ENCODE measurements at regions of chr10 and their contacts with region 1.

Region 1: GRCh38 chr10:48390933-48391845 is 84.7 kb downstream of the MAPK8 start:
- DNase-seq: no peak
- H3K4me3 Mint-ChIP-seq: no peak overlapping the region
- H3K27ac Mint-ChIP-seq: peak overlapping the region; percentile 4
- H3K4me1 Mint-ChIP-seq: peaks cover 50% of the 10 kb centered on the region
- H3K27me3 Mint-ChIP-seq: no peaks in the 10 kb centered on the region

Region 2: GRCh38 chr10:48336978-48337599 is 54.1 kb before region 1 on chr10:
- intact Hi-C with region 1: loop called (anchors 10 kb)
- DNase-seq: no peak
- H3K4me3 Mint-ChIP-seq: peak overlapping the region; percentile 26
- H3K27ac Mint-ChIP-seq: peak overlapping the region; percentile 74
- H3K4me1 Mint-ChIP-seq: peaks cover 55% of the 10 kb centered on the region
- H3K27me3 Mint-ChIP-seq: no peaks in the 10 kb centered on the region

Region 3: DNA sequence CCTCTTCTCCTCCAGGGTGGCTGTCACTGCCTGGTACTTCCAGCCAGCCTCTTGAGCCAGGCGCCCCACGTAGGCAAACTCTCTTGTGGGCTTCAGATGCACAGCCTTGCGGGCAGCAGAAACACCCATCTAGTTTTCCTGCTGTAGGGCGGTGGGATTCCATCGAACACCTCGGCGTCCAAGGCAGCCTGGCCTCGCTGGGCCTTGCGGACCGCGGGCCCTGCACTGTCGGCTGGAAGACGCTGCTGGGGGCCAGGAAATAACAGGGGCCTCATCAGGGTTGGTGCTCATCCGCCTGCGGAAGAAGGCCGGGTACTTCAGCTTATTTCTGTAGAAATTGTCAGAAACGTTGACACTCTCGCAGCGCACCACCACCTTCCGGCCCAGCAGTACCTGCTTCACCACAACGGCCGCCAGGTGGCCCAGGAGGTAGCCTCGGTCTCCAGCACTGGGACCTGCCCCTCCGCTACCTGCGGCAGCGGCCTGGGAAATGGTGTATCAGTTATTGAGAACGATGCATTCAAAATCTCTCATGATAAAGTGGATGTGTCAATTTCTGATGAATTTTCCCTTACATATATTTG is 354.6 kb after region 1 on chr10:
- intact Hi-C with region 1: no loop called
- DNase-seq: no peak
- H3K4me3 Mint-ChIP-seq: no peak overlapping the region
- H3K27ac Mint-ChIP-seq: no peak overlapping the region
- H3K4me1 Mint-ChIP-seq: no peaks in the 10 kb centered on the region
- H3K27me3 Mint-ChIP-seq: no peaks in the 10 kb centered on the region

Measured in activated T-helper 2 cell treated with anti-CD3 and anti-CD28 coated beads, Interferon-gamma antibody, Interleukin-2, Interleukin-4, amounts not matched to agents 10 μg/mL and 5 μg/mL and 100 μg/mL, durations not matched to agents 14 hours and 24 hours and 36 hours (primary cell).